ENCODE measurements at regions of chr9 and their contacts with region 1.

Region 1: DNA sequence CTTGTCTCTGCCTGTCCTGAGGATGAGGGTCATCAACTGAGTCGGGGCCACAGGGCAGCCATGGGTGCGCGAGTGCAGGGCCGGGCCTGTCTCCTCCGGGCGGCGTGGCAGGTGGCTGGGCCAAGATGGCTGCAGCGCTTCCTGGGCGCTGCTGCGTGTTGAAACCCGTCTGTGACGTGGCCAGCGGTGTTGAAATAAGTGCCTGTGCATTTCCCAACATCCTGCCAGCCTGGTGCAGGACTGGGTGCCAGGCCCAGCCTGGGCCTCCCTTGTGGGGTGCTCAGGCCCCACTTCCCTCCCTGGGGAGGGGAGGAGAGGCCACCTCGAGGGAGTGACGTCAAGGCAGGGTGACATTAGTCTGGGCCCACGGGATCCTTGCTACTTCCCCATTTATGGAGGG is 45.5 kb downstream of the RXRA start:
- DNase-seq: peak; percentile 99 to 100 (median 100)
- H3K4me3 ChIP-seq: no peak overlapping the region
- H3K4me3 Mint-ChIP-seq: peak overlapping the region; percentile 75 to 85
- H3K27ac ChIP-seq: peak overlapping the region; percentile 99 to 100
- H3K27ac Mint-ChIP-seq: peak overlapping the region; percentile 100
- H3K4me1 ChIP-seq: peaks cover 96 to 99% of the 10 kb centered on the region in 2 donors
- H3K4me1 Mint-ChIP-seq: peaks cover 89% of the 10 kb centered on the region
- H3K27me3 ChIP-seq: no peaks in the 10 kb centered on the region
- H3K27me3 Mint-ChIP-seq: no peaks in the 10 kb centered on the region
- CTCF ChIP-seq: no peak

Region 2: GRCh38 chr9:134243778-134244467 is 127.8 kb before region 1 on chr9:
- intact Hi-C with region 1: loop called in 1 of 2 experiments (anchors 5 kb)
- DNase-seq: peak; percentile 93 to 97 (median 97)
- H3K4me3 ChIP-seq: peak overlapping the region in 1 of 3 experiments; percentile 35
- H3K4me3 Mint-ChIP-seq: peak overlapping the region in 1 of 2 donors; percentile 86
- H3K27ac ChIP-seq: peak overlapping the region; percentile 24 to 27
- H3K27ac Mint-ChIP-seq: peak overlapping the region; percentile 66 to 95 (median 90)
- H3K4me1 ChIP-seq: peaks cover 25 to 33% of the 10 kb centered on the region in 2 donors
- H3K4me1 Mint-ChIP-seq: peaks cover 34% of the 10 kb centered on the region
- H3K27me3 ChIP-seq: peaks cover 0 to 13% of the 10 kb centered on the region in 2 donors
- H3K27me3 Mint-ChIP-seq: peaks cover 21 to 25% (median 23%) of the 10 kb centered on the region in 3 donors
- CTCF ChIP-seq: no peak

Region 3: GRCh38 chr9:134455934-134456739 is 84.4 kb after region 1 on chr9:
- intact Hi-C with region 1: loop called in 1 of 2 experiments (anchors 5 kb)
- DNase-seq: peak; percentile 81 to 89 (median 83)
- H3K4me3 ChIP-seq: peak overlapping the region; percentile 33 to 68 (median 45)
- H3K4me3 Mint-ChIP-seq: peak overlapping the region; percentile 70 to 91
- H3K27ac ChIP-seq: peak overlapping the region; percentile 74 to 77
- H3K27ac Mint-ChIP-seq: peak overlapping the region; percentile 87 to 96 (median 94)
- H3K4me1 ChIP-seq: peaks cover 41 to 48% of the 10 kb centered on the region in 2 donors
- H3K4me1 Mint-ChIP-seq: peaks cover 48% of the 10 kb centered on the region
- H3K27me3 ChIP-seq: no peaks in the 10 kb centered on the region
- H3K27me3 Mint-ChIP-seq: peaks cover 0 to 9% (median 1%) of the 10 kb centered on the region in 3 donors
- CTCF ChIP-seq: no peak